Activated T-helper 1 cell treated with anti-CD3 and anti-CD28 coated beads, Interleukin-12 subunit alpha, Interleukin-12 subunit beta, Interleukin-2, Interleukin-4 antibody, amounts not matched to agents 30 ng/mL and 10 ng/mL and 1 ng/mL, durations not matched to agents 14 hours and 24 hours and 36 hours (primary cell): ENCODE measurements at regions of chr11 and their contacts with region 1.

Region 1: GRCh38 chr11:2142762-2143202 is 3.6 kb upstream of the IGF2 start:
- DNase-seq: no peak
- H3K4me3 Mint-ChIP-seq: peak overlapping the region; percentile 50
- H3K27ac Mint-ChIP-seq: peak overlapping the region; percentile 71
- H3K4me1 Mint-ChIP-seq: peaks cover 12% of the 10 kb centered on the region
- H3K27me3 Mint-ChIP-seq: peaks cover 54% of the 10 kb centered on the region

Region 2: GRCh38 chr11:1564535-1565172 is 578.1 kb before region 1 on chr11:
- intact Hi-C with region 1: no loop called
- DNase-seq: no peak
- H3K4me3 Mint-ChIP-seq: no peak overlapping the region
- H3K27ac Mint-ChIP-seq: no peak overlapping the region
- H3K4me1 Mint-ChIP-seq: no peaks in the 10 kb centered on the region
- H3K27me3 Mint-ChIP-seq: peaks cover 5% of the 10 kb centered on the region

Region 3: GRCh38 chr11:2077061-2077802 is 65.5 kb before region 1 on chr11:
- intact Hi-C with region 1: loop called (anchors 1 kb)
- DNase-seq: peak; percentile 44
- H3K4me3 Mint-ChIP-seq: no peak overlapping the region
- H3K27ac Mint-ChIP-seq: peak overlapping the region; percentile 93
- H3K4me1 Mint-ChIP-seq: peaks cover 27% of the 10 kb centered on the region
- H3K27me3 Mint-ChIP-seq: peaks cover 4% of the 10 kb centered on the region

Region 4: DNA sequence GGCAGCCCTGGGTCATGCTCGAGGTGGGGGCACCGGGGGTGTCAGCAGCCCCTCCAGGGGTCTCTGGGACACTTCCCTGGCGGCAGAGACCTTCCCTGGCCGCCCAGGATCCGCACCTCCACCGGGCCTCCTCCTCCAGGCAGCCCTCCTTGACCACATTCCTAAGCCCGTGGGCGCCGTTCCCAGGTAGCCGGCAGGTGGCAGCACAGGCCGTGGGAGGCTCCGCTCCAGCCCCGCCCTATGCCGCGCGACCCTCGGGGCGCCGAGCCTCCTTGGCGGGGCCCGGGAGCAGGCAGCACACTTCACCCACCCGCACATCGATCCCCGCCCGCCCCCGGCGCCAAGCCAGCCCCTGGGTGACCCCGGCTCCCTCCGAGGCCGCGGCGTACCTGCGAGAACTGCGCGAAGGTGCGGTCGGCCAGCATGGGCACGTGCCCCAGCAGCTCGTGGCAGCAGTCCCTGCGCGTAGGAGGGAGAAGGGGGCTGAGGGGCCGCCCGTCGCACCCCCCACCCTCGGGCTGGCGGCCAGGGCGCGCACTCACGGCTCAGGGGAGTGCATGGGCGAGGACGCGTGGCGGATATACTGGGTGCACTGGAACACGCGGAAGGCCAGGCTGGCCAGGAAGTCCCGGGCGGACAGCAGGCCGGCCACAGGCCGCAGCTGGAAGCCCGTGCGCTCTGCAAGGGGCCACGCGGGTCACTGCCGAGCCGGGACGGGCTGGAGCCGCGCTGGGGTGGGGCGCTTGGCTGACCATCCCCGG is 23.5 kb after region 1 on chr11:
- intact Hi-C with region 1: no loop called
- DNase-seq: no peak
- H3K4me3 Mint-ChIP-seq: no peak overlapping the region
- H3K27ac Mint-ChIP-seq: no peak overlapping the region
- H3K4me1 Mint-ChIP-seq: no peaks in the 10 kb centered on the region
- H3K27me3 Mint-ChIP-seq: no peaks in the 10 kb centered on the region

Region 5: DNA sequence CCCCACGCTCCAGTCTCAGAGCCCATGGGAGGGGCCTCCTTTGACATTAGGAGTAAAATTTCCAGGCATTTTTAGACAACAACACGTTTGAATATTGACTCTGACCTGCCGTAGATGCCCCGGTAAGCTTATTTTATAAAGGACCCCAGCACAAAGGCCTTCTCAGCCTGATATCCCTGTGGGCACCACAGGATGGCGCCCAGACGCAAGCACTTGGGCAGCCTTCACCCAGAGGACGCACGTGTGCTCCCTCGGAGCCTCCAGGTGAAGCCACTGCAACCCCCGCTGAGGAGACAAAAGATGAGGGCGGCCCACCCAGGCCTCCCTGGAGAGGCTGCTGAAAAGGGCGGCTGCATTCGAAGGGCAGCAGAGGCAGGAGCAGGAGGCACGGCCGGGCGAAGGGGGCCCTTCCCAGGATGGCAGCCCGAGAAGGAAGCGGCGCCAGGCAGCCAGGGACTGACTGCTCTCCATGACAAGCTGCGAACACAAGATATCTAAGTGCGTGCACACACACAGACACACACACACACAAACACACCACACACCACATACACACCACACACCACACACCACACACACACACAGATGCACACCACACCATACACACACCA is 44.0 kb after region 1 on chr11:
- intact Hi-C with region 1: no loop called
- DNase-seq: no peak
- H3K4me3 Mint-ChIP-seq: no peak overlapping the region
- H3K27ac Mint-ChIP-seq: no peak overlapping the region
- H3K4me1 Mint-ChIP-seq: no peaks in the 10 kb centered on the region
- H3K27me3 Mint-ChIP-seq: peaks cover 7% of the 10 kb centered on the region

Region 6: GRCh38 chr11:2269601-2270321 is 127.0 kb after region 1 on chr11:
- intact Hi-C with region 1: loop called (anchors 1 kb)
- DNase-seq: peak; percentile 25
- H3K4me3 Mint-ChIP-seq: no peak overlapping the region
- H3K27ac Mint-ChIP-seq: no peak overlapping the region
- H3K4me1 Mint-ChIP-seq: peaks cover 16% of the 10 kb centered on the region
- H3K27me3 Mint-ChIP-seq: peaks cover 32% of the 10 kb centered on the region

Region 7: GRCh38 chr11:2561696-2562581 is 419.2 kb after region 1 on chr11:
- intact Hi-C with region 1: no loop called
- DNase-seq: no peak
- H3K4me3 Mint-ChIP-seq: no peak overlapping the region
- H3K27ac Mint-ChIP-seq: no peak overlapping the region
- H3K4me1 Mint-ChIP-seq: no peaks in the 10 kb centered on the region
- H3K27me3 Mint-ChIP-seq: no peaks in the 10 kb centered on the region